ENCODE measurements at regions of chr1 and their contacts with region 1.

Region 1: GRCh38 chr1:92994105-92994712 is 32.9 kb upstream of the DIPK1A start:
- DNase-seq: peak; percentile 96
- H3K4me3 ChIP-seq: no peak overlapping the region
- H3K27ac ChIP-seq: peak overlapping the region; percentile 26
- H3K4me1 ChIP-seq: peaks cover 47% of the 10 kb centered on the region
- CTCF ChIP-seq: peak; percentile 98

Region 2: GRCh38 chr1:92739669-92740524 is 254.3 kb before region 1 on chr1:
- CTCF ChIA-PET with region 1: no interaction called
- POLR2A ChIA-PET with region 1: no interaction called
- intact Hi-C with region 1: loop called (anchors 5 kb)
- DNase-seq: no peak
- H3K4me3 ChIP-seq: no peak overlapping the region
- H3K27ac ChIP-seq: no peak overlapping the region
- H3K4me1 ChIP-seq: peaks cover 11% of the 10 kb centered on the region
- CTCF ChIP-seq: no peak

Region 3: GRCh38 chr1:92858564-92859399 is 135.4 kb before region 1 on chr1:
- CTCF ChIA-PET with region 1: interaction called, 11 read pairs
- POLR2A ChIA-PET with region 1: interaction called, 9 read pairs
- intact Hi-C with region 1: loop called (anchors 1 kb)
- DNase-seq: peak; percentile 91
- H3K4me3 ChIP-seq: peak overlapping the region; percentile 56
- H3K27ac ChIP-seq: peak overlapping the region; percentile 65
- H3K4me1 ChIP-seq: peaks cover 28% of the 10 kb centered on the region
- CTCF ChIP-seq: peak; percentile 100

Region 4: DNA sequence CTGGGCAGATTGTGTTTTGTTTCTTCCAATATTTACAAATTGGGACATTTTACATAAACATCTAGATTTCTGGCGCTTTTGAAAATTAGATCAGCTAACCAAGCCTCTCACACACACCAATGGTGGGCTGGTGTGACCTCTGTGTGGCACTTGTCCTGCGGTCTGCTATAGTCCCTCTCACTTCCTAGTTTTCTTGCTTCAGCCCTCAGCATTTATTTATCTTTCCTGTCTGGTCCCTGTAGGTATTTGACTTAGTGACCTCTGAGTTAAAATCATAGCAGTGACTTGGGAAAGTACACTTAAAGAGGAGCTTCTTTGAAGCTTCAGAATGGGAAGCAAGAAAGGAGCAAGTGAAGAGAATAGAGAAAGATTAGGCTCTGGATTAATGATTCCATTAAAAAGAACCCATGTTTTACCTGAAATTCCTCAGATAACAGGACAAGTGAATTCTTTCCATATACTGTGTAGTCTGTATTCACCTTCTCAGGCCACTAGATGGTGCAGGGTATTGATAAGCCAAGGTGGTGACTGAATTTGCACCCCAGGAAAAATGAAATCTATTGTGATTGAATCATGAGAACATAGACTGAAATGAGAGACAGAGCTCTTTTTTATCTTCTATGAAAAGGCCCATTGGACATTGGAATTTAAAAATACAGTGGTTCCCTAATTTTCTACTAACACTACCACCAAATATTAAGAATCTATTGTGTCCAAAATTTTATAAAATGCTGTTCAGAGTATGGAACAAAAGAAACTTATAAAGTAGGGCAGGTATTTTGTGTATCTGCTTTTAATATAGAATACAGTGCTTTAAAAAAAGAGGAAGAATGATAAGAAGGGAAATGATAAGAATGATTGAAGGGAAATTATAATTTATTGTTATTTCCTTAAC is 25.8 kb before region 1 on chr1:
- CTCF ChIA-PET with region 1: interaction called, 27 read pairs
- POLR2A ChIA-PET with region 1: interaction called, 15 read pairs
- intact Hi-C with region 1: loop called (anchors 1 kb)
- DNase-seq: peak; percentile 63
- H3K4me3 ChIP-seq: peak overlapping the region; percentile 5
- H3K27ac ChIP-seq: peak overlapping the region; percentile 58
- H3K4me1 ChIP-seq: peaks cover 92% of the 10 kb centered on the region
- CTCF ChIP-seq: peak; percentile 97

Region 5: DNA sequence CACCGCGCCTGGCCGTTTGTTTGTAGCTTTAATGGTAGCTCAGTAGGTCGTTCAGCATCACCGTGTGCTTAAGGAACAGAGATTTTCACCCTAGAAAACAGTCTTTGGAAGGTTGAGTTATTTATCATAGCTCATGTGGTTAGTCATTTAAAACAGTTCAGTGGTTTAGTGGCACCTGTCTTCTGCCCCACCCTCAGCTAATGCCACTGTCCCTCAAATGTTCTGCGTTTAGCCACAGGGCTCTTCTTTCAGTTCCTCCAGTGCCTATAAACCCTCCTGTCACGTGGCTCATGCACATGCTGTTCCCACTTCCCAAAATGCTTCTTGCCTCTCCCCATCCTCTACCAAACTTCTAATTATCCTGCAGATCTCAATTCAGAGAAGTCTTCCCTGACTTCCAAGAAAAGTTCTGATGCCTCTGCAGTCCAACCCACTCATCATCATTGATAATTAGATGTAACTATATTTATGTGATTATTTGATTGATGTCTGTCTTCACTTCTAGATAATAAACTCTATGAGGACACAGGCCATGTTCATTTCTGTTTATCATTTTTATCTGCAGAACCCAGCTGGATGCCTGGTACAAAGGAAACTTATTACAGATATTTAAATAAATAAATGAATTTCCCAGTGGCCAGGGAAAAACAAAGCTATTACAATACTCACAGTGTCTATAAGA is 18.5 kb before region 1 on chr1:
- CTCF ChIA-PET with region 1: interaction called, 27 read pairs
- POLR2A ChIA-PET with region 1: interaction called, 41 read pairs
- intact Hi-C with region 1: no loop called
- DNase-seq: peak; percentile 92
- H3K4me3 ChIP-seq: peak overlapping the region; percentile 44
- H3K27ac ChIP-seq: peak overlapping the region; percentile 96
- H3K4me1 ChIP-seq: peaks cover 99% of the 10 kb centered on the region
- CTCF ChIP-seq: no peak

Region 6: GRCh38 chr1:92980732-92981647 is 13.2 kb before region 1 on chr1:
- CTCF ChIA-PET with region 1: interaction called, 27 read pairs
- POLR2A ChIA-PET with region 1: interaction called, 41 read pairs
- intact Hi-C with region 1: no loop called
- DNase-seq: peak; percentile 37
- H3K4me3 ChIP-seq: no peak overlapping the region
- H3K27ac ChIP-seq: peak overlapping the region; percentile 32
- H3K4me1 ChIP-seq: peaks cover 56% of the 10 kb centered on the region
- CTCF ChIP-seq: no peak

Measured in OCI-LY7 (cell line).